Activated naive CD8-positive, alpha-beta T cell treated with anti-CD3 and anti-CD28 coated beads, Interleukin-2, amount 10 ng/mL, durations not matched to agents 7 days and 5 days (primary cell): ENCODE measurements at regions of chr17 and their contacts with region 1.

Region 1: DNA sequence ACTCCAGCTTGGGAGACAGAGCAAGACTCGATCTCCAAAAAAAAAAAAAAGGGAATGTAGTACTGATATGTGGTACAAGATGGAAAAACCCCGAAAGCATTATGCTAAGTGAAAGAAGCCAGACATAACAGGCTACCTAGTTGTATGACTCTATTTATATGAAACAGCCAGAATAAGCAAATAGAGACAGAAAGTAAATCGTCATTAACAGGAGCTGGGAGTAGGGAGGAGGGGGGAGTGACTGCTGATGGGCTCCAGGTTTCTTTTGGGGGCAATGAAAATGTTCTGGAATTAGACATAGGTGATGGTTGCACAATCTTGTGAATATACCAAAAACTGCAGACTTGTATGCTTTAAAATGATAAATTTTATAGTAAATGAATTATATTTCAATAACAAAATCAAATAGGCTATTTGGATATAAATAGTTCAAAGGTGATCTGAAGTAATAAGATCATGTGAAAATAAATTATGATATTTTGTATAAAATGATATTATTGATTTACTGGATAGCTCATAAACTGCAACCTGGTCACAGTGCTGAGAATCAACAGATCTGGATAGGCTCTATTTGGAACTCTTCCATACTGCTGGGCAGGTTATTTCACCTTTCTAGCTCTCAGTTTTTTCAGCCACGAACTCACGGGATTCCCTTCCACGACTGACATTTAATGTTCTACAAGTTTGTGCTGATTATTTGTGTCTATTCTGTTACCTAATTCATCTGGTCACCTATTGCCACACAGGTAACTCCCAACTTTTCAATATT is 27.1 kb downstream of the ZNF652 start:
- DNase-seq: no peak
- ATAC-seq: no peak
- H3K4me3 Mint-ChIP-seq: no peak overlapping the region
- H3K27ac Mint-ChIP-seq: no peak overlapping the region
- H3K4me1 Mint-ChIP-seq: peaks cover 15% of the 10 kb centered on the region
- H3K27me3 Mint-ChIP-seq: no peaks in the 10 kb centered on the region

Region 2: DNA sequence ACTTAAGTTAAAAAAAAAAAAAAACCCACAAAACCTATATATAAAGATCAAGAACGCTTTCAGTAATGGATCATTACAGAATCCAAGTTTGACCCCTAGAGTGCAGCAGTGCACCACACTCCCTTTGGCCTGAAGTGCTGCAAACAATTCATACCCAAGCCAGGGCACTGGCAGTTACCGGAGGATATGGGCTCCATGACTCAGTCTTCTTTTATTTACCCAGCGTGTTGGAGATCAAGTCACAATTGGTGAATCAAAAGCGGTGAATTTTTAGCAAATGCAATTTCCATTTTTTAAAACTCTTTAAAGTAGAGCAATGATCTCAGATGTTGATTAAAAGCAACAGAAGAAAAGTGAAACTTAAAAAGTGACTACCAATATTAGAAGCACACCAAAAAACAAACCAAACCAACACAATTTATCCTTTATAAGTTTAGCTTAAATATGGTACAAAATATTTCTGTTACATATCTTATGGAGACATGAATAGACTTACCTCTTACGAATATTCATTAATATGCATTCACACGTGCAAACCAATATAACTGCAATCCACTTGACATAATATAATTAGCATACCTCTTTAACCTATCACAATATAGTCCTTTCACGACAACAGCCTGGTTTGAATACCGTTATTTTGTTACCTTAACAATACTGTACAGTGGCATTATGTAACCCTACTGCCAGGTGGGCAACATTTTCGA is 19.2 kb before region 1 on chr17:
- POLR2A ChIA-PET with region 1: interaction called, 10 read pairs
- DNase-seq: peak; percentile 59
- ATAC-seq: peak; percentile 99
- H3K4me3 Mint-ChIP-seq: peak overlapping the region; percentile 47
- H3K27ac Mint-ChIP-seq: peak overlapping the region; percentile 79
- H3K4me1 Mint-ChIP-seq: peaks cover 27% of the 10 kb centered on the region
- H3K27me3 Mint-ChIP-seq: no peaks in the 10 kb centered on the region

Region 3: GRCh38 chr17:49349535-49349934 is 14.6 kb after region 1 on chr17:
- POLR2A ChIA-PET with region 1: no interaction called
- DNase-seq: no peak
- ATAC-seq: no peak
- H3K4me3 Mint-ChIP-seq: no peak overlapping the region
- H3K27ac Mint-ChIP-seq: no peak overlapping the region
- H3K4me1 Mint-ChIP-seq: peaks cover 33% of the 10 kb centered on the region
- H3K27me3 Mint-ChIP-seq: no peaks in the 10 kb centered on the region